ENCODE measurements at regions of chr5 and their contacts with region 1.

Region 1: GRCh38 chr5:131488463-131488862 is 146.6 kb downstream of the RAPGEF6 start:
- DNase-seq: no peak
- ATAC-seq: peak; percentile 69
- H3K4me3 Mint-ChIP-seq: peak overlapping the region; percentile 19
- H3K27ac Mint-ChIP-seq: peak overlapping the region; percentile 85
- H3K4me1 Mint-ChIP-seq: peaks cover 24% of the 10 kb centered on the region
- H3K27me3 Mint-ChIP-seq: no peaks in the 10 kb centered on the region
- CTCF ChIP-seq: no peak

Region 2: GRCh38 chr5:131386779-131387178 is 101.7 kb before region 1 on chr5:
- CTCF ChIA-PET with region 1: no interaction called
- POLR2A ChIA-PET with region 1: no interaction called
- intact Hi-C with region 1: no loop called
- DNase-seq: no peak
- ATAC-seq: no peak
- H3K4me3 Mint-ChIP-seq: no peak overlapping the region
- H3K27ac Mint-ChIP-seq: peak overlapping the region; percentile 99
- H3K4me1 Mint-ChIP-seq: peaks cover 85% of the 10 kb centered on the region
- H3K27me3 Mint-ChIP-seq: no peaks in the 10 kb centered on the region
- CTCF ChIP-seq: no peak

Region 3: DNA sequence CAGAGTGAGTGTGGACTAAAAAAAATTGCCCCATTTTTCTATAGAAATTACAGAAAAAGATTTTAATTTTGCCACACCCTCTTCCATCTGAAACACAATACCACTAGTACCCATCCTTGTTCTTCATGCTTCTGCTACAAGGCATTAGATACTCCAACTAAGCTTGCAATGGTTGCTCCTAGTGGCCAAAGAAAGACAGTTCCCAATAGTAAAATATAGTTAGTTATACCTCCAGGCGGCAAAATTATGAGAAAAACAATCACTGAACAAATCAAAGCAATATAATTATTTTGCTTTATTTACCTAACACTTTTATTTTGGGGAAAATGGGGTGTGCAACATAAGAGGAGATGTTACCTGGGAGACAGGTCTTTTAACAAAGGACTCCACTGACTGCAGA is 45.4 kb after region 1 on chr5:
- CTCF ChIA-PET with region 1: no interaction called
- POLR2A ChIA-PET with region 1: interaction called, 3 read pairs
- intact Hi-C with region 1: loop called (anchors 5 kb)
- DNase-seq: no peak
- ATAC-seq: no peak
- H3K4me3 Mint-ChIP-seq: no peak overlapping the region
- H3K27ac Mint-ChIP-seq: peak overlapping the region; percentile 56
- H3K4me1 Mint-ChIP-seq: peaks cover 76% of the 10 kb centered on the region
- H3K27me3 Mint-ChIP-seq: no peaks in the 10 kb centered on the region
- CTCF ChIP-seq: peak; percentile 46

Measured in activated CD8-positive, alpha-beta T cell treated with anti-CD3 and anti-CD28 coated beads for 36 hours (primary cell).